Head of caudate nucleus (tissue), 42 donors: ENCODE measurements at regions of chr12 and their contacts with region 1.

Region 1: DNA sequence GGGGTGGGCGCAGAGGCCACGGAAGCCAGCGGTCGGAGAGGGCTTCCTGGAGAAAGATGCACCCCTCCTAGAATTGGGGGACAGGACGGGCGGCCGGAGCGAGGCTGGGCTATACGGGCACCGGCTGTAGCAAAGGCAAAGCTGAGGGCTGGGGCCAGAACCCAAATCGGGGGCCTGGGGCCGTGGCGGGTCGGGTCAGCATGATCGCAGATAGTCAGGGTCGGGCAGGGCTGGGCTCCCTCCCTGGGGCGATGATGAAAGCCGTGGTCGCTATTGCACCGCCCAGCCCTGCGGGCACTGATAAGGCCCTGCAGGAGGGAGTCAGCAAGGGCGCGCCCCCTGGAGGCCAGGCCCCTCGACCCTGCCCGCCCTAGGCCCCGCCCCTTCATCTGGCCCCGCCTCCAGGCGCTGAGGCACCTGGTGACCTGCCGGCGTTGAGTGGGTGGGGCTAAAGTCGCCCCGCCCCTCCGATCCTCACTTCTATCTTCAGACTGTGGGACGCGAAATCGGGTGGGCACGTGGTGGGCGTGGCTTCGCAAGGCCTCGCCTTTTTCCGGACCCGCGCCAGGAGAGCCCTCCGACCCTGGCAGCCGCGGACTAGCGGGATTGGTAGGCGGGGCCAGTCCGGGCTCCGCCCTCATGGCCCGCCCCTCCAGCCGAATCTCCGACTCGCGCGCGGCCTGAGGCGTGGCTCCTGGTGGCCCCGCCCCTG is 418 bp upstream of the SH2B3 start:
- DNase-seq: peak; percentile 81 to 97 (median 91)

Region 2: GRCh38 chr12:111298582-111299436 is 106.5 kb before region 1 on chr12:
- intact Hi-C with region 1: no loop called
- DNase-seq: peak; percentile 16 to 82 (median 60)

Region 3: GRCh38 chr12:111444925-111445725 is 39.8 kb after region 1 on chr12:
- intact Hi-C with region 1: no loop called
- DNase-seq: peak; percentile 14 to 76 (median 56)

Region 4: GRCh38 chr12:111673503-111673902 is 268.2 kb after region 1 on chr12:
- intact Hi-C with region 1: loop called (anchors 10 kb)
- DNase-seq: peak in 2 of 42 donors; percentile 27 to 28

Region 5: GRCh38 chr12:111828338-111828979 is 423.2 kb after region 1 on chr12:
- intact Hi-C with region 1: no loop called
- DNase-seq: peak in 1 of 42 donors; percentile 25